Activated B cell treated with CpG ODN at 0.5 μM for 24 hours (primary cell): ENCODE measurements at regions of chr10 and their contacts with region 1.

Region 1: GRCh38 chr10:103244663-103245271 is 920 bp upstream of the RPEL1 start:
- DNase-seq: peak; percentile 49
- ATAC-seq: peak; percentile 74
- H3K4me3 Mint-ChIP-seq: no peak overlapping the region
- H3K27ac Mint-ChIP-seq: no peak overlapping the region
- H3K4me1 Mint-ChIP-seq: peaks cover 20% of the 10 kb centered on the region
- H3K27me3 Mint-ChIP-seq: peaks cover 4% of the 10 kb centered on the region
- CTCF ChIP-seq: no peak

Region 2: DNA sequence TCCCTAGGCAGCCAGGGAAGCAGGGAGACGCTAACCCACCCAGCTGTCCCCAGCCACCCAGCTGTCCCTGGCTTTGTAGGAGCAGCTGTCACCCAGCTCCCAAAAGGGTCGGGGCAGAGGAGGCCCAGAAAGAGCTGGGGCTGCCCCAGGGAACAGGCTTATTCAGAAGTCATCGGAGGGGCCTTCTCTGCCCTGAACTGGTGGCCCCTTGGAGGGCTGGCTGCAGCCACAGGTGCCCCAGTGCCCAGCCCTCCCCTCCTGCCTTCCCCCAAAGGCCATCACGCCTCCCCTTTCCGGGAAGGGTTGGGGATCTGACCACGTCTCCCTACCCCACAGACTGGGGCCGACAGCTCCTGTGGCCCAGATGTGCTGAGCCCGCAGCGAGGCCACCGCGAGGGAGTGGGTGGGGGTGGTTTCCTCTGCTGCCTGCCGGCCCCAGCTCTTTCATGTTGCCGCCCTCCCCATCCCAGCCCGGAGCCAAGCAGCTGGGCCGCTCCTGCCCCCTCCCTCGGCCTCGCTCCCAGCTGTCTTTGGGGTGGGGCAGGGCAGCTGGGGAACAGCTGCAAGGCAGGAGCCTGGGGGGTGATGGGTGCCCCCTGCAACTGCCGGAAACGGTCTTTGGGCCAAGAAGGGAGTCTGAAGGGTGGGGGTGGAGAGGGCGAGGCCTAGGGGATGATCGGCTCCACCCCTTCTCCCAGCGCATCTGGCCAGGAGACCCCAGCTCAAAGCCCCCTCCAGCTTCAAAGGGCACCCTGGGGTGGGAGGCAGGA is 583.7 kb before region 1 on chr10:
- CTCF ChIA-PET with region 1: no interaction called
- POLR2A ChIA-PET with region 1: no interaction called
- intact Hi-C with region 1: no loop called
- DNase-seq: no peak
- ATAC-seq: peak; percentile 78
- H3K4me3 Mint-ChIP-seq: no peak overlapping the region
- H3K27ac Mint-ChIP-seq: no peak overlapping the region
- H3K4me1 Mint-ChIP-seq: peaks cover 16% of the 10 kb centered on the region
- H3K27me3 Mint-ChIP-seq: no peaks in the 10 kb centered on the region
- CTCF ChIP-seq: no peak

Region 3: DNA sequence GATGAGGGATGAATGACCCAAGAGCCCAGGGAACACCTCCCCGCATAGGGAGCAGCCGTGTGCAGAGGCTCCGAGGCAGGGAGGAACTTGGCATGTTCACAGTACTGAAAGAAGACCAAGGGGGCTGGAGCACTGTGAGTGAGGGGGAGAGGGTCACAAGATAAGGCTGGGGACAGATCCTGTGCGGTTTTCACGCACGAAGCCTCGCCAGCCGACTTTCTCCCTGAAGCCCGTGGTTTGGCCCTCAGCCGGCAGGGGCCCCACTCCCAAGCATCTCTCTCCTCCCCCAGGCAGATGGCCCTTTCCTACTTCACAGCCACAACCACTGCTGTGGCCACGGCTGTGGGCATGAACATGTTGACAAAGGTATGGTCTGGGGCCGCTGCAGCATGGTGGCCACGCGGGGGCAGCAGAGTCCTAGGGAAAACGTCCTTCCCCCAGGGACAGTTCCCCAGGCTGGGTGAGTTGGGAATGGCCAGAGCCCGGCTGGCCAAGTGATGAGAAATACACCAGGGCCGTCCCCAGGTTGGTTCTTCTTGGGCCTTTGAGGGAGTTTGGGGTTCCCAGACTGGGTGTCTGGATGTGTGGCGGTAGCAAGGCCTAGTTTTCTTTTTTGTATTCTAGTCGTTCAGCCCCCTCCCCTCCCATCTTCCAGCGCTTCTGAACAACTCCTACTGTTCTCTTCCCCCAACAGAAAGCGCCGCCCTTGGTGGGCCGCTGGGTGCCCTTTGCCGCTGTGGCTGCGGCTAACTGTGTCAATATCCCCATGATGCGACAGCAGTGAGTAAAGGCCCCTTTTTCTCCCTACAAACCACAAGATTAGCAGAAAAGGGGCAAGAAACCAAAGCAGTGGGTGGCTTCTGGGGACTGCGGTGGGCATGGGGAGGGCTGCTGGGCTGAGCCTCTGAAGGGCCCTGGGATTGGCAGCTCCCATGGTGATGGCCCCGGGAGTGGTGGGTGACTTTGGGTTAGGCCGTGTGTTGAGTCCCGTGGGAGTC is 515.4 kb before region 1 on chr10:
- CTCF ChIA-PET with region 1: no interaction called
- POLR2A ChIA-PET with region 1: no interaction called
- intact Hi-C with region 1: loop called (anchors 1 kb)
- DNase-seq: peak; percentile 37
- ATAC-seq: peak; percentile 78
- H3K4me3 Mint-ChIP-seq: no peak overlapping the region
- H3K27ac Mint-ChIP-seq: no peak overlapping the region
- H3K4me1 Mint-ChIP-seq: no peaks in the 10 kb centered on the region
- H3K27me3 Mint-ChIP-seq: no peaks in the 10 kb centered on the region
- CTCF ChIP-seq: no peak

Region 4: DNA sequence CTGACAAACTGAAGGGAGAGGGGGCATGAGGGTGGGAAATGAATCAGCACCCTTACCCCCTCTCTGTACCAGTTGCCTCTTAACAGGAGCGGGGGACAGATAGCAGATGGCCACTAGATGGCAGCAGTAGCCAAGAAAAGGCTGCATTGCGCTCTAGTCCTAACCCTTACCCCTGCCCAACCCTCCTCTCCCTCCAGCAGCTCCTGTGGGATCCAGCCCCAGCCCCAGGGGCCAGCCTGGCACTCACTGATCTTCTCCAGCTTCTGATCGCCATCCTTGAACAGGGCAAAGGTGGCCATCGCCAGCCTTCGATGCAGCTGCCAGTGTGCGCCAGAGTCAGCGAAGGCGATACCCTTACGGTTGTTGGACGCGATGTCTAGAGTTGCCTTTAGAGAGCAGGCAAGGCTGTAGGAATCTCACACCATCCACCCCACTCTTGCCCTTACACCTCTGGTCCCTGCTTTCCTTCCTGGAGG is 409.7 kb before region 1 on chr10:
- CTCF ChIA-PET with region 1: interaction called, 30 read pairs
- POLR2A ChIA-PET with region 1: no interaction called
- intact Hi-C with region 1: loop called (anchors 1 kb)
- DNase-seq: peak; percentile 57
- ATAC-seq: peak; percentile 95
- H3K4me3 Mint-ChIP-seq: no peak overlapping the region
- H3K27ac Mint-ChIP-seq: no peak overlapping the region
- H3K4me1 Mint-ChIP-seq: peaks cover 2% of the 10 kb centered on the region
- H3K27me3 Mint-ChIP-seq: peaks cover 3% of the 10 kb centered on the region
- CTCF ChIP-seq: peak; percentile 21

Region 5: DNA sequence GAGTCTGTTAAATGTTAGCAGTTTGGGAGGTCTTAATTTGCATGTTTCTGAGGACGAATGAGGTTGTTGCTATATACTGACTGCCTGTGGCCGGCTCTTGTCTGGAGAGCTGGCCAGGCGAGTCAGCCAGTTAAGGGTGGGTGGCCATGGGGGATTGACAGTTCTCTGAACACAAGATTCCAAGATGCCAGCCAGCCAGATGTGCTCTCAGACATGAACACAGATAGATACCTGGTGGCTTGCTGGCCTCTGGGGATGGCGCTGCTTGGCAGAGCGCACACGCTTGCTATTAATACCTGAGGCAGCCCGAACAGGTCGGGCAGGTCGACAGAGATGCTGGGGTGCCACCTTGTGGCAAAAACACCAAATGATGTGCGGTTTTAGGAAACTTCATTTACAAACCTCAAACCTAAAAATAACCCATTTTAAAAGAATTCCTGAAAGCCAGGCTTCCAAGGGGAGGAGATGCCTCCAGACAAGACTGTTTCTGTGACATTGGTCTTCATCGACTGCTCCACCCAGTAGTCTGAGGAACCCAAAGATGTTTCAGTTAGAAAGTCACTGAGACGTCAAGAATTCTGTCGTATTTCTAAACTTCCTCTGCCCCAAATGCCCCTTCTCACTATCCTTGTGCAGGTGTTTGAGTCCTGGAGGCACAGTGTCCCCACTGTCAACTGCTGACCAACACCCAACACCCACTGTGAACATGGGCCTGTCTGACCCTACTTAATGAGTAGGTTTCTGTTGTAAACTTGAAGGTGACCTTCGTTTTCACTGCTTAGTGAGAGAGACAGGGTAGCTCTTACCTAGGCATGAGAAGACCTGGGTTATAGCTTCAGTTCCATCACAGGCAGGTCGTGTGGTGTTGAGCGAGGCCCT is 175.1 kb before region 1 on chr10:
- CTCF ChIA-PET with region 1: interaction called, 15 read pairs
- POLR2A ChIA-PET with region 1: no interaction called
- intact Hi-C with region 1: loop called (anchors 1 kb)
- DNase-seq: peak; percentile 40
- ATAC-seq: peak; percentile 82
- H3K4me3 Mint-ChIP-seq: peak overlapping the region; percentile 55
- H3K27ac Mint-ChIP-seq: peak overlapping the region; percentile 73
- H3K4me1 Mint-ChIP-seq: peaks cover 33% of the 10 kb centered on the region
- H3K27me3 Mint-ChIP-seq: no peaks in the 10 kb centered on the region
- CTCF ChIP-seq: no peak

Region 6: DNA sequence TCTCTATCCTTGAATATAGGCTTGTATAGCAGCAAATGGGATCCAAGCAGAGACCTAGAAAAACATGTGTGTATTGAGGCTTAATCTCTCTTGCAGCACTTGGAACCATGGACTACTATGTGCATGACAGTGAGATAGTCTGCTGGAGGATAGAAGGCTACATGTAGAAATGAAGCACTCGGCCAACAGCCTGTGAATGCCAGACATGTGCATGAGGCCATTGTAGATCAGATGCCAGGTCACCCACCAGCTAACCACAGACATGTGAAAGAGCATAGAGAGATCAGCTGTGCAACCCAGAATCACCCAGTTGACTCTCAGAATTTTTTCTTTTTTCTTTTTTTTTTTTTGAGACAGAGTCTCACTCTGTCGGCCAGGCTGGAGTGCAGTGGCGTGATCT is 142.6 kb before region 1 on chr10:
- CTCF ChIA-PET with region 1: interaction called, 5 read pairs
- POLR2A ChIA-PET with region 1: no interaction called
- intact Hi-C with region 1: loop called (anchors 5 kb)
- DNase-seq: no peak
- ATAC-seq: no peak
- H3K4me3 Mint-ChIP-seq: no peak overlapping the region
- H3K27ac Mint-ChIP-seq: no peak overlapping the region
- H3K4me1 Mint-ChIP-seq: peaks cover 5% of the 10 kb centered on the region
- H3K27me3 Mint-ChIP-seq: no peaks in the 10 kb centered on the region
- CTCF ChIP-seq: no peak

Region 7: DNA sequence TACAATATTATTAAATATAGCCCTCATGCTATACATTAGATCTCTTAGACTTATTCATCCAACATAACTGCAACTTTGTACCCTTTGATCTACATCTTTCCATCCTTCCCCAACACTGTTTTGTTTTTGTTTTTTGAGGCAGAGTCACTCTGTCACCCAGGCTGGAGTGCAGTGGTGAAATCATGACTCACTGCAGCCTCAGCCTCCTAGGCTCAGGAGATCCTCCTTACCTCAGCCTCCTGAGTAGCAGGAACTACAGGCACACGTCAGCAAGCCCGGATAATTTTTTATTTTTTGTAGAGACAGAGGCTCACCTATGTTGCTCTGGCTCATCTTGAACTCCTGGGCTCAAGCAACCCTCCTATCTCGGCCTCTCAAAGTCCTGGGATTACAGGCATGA is 105.0 kb before region 1 on chr10:
- CTCF ChIA-PET with region 1: no interaction called
- POLR2A ChIA-PET with region 1: no interaction called
- intact Hi-C with region 1: loop called (anchors 10 kb)
- DNase-seq: no peak
- ATAC-seq: no peak
- H3K4me3 Mint-ChIP-seq: no peak overlapping the region
- H3K27ac Mint-ChIP-seq: no peak overlapping the region
- H3K4me1 Mint-ChIP-seq: peaks cover 11% of the 10 kb centered on the region
- H3K27me3 Mint-ChIP-seq: no peaks in the 10 kb centered on the region
- CTCF ChIP-seq: no peak

Region 8: GRCh38 chr10:103181244-103181643 is 63.5 kb before region 1 on chr10:
- CTCF ChIA-PET with region 1: interaction called, 4 read pairs
- POLR2A ChIA-PET with region 1: no interaction called
- intact Hi-C with region 1: loop called (anchors 2 kb)
- DNase-seq: no peak
- ATAC-seq: peak; percentile 92
- H3K4me3 Mint-ChIP-seq: peak overlapping the region; percentile 68
- H3K27ac Mint-ChIP-seq: peak overlapping the region; percentile 89
- H3K4me1 Mint-ChIP-seq: peaks cover 77% of the 10 kb centered on the region
- H3K27me3 Mint-ChIP-seq: no peaks in the 10 kb centered on the region
- CTCF ChIP-seq: no peak

Region 9: GRCh38 chr10:103204353-103205255 is 40.2 kb before region 1 on chr10:
- CTCF ChIA-PET with region 1: no interaction called
- POLR2A ChIA-PET with region 1: no interaction called
- intact Hi-C with region 1: no loop called
- DNase-seq: no peak
- ATAC-seq: no peak
- H3K4me3 Mint-ChIP-seq: no peak overlapping the region
- H3K27ac Mint-ChIP-seq: no peak overlapping the region
- H3K4me1 Mint-ChIP-seq: no peaks in the 10 kb centered on the region
- H3K27me3 Mint-ChIP-seq: peaks cover 4% of the 10 kb centered on the region
- CTCF ChIP-seq: no peak